GM10248 (cell line): ENCODE measurements at regions of chr12 and their contacts with region 1.

Region 1: DNA sequence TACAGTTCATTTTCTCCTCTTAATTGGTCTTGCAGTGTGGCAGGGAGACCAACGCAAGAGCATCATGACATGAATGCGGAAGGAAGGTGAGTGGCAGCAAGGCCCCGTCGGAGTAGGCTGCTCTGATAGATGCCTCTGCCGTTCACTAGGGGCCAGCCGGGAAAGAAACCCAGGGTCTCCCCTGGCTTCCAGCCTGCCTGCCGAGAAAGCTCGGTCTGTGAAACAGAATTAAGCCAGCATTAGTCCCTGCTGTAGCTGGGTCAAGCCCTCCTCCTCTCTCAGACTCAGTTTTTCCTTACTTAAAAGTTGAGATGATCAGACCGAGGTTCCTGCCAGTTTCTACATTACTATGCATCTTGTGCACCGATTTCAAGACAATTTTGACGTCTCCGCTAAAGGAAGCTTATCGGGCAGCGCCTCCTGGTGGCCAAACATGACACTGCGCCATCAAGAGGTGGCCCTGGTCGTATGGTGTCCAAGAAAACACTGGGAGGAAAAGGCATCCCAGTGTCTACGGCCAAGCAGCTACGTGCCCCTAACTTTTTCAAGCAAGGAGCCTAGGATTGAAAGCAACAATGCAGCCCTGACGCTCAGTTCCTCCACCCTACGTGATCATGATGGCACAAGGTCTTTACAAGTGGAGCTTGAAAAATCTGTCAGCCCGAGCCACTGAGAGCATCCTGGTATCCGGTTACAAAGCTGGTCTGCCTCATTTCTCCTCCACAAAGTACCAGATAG is 131.6 kb downstream of the KSR2 start:
- DNase-seq: peak; percentile 73
- CTCF ChIP-seq: peak; percentile 95

Region 2: GRCh38 chr12:117212563-117213190 is 624.5 kb before region 1 on chr12:
- CTCF ChIA-PET with region 1: interaction called, 28 read pairs
- POLR2A ChIA-PET with region 1: no interaction called
- DNase-seq: peak; percentile 78
- CTCF ChIP-seq: peak; percentile 84

Region 3: DNA sequence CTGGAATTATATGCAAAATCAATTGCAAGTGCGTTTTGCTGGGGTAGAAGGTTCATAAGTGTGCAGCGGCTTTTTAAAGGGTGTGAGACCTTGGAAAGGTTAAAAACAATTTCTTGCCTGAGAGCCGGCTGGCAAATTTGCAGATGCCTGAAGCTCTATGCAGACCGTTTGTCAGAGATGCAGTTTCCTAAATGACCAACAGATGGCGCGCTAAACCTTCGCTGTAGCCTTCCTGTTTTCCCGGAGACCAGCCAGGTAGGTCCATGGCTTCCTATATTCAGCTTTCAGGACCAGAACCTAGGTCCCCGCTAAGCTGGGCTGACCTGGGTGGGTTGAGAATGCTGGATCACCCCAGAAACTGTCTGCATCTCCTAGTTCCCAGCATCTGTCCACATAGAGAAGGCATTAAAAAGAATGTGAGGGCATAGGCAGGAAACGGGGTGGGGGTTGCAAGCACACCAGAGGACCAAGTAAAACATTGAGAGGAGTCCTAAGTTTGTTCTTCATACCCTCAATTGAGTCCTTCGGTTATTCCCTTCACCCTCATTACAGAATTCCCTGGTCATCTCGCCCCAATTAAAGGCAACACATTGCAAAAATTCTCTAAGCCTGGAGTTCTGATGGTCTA is 470.0 kb before region 1 on chr12:
- CTCF ChIA-PET with region 1: interaction called, 103 read pairs
- POLR2A ChIA-PET with region 1: no interaction called
- DNase-seq: peak; percentile 75
- CTCF ChIP-seq: peak; percentile 79

Region 4: GRCh38 chr12:117587631-117588287 is 249.4 kb before region 1 on chr12:
- CTCF ChIA-PET with region 1: interaction called, 10 read pairs
- POLR2A ChIA-PET with region 1: no interaction called
- DNase-seq: peak; percentile 68
- CTCF ChIP-seq: peak; percentile 83

Region 5: GRCh38 chr12:117809509-117809908 is 27.7 kb before region 1 on chr12:
- CTCF ChIA-PET with region 1: interaction called, 12 read pairs
- POLR2A ChIA-PET with region 1: no interaction called
- DNase-seq: no peak
- CTCF ChIP-seq: no peak

Region 6: GRCh38 chr12:117850048-117850447 is 12.9 kb after region 1 on chr12:
- CTCF ChIA-PET with region 1: interaction called, 63 read pairs
- POLR2A ChIA-PET with region 1: no interaction called
- DNase-seq: peak; percentile 55
- CTCF ChIP-seq: peak; percentile 70

Region 7: GRCh38 chr12:117919479-117919878 is 82.3 kb after region 1 on chr12:
- CTCF ChIA-PET with region 1: no interaction called
- POLR2A ChIA-PET with region 1: no interaction called
- DNase-seq: no peak
- CTCF ChIP-seq: no peak